Gastrocnemius medialis (tissue), 4 donors: ENCODE measurements at regions of chr5 and their contacts with region 1.

Region 1: DNA sequence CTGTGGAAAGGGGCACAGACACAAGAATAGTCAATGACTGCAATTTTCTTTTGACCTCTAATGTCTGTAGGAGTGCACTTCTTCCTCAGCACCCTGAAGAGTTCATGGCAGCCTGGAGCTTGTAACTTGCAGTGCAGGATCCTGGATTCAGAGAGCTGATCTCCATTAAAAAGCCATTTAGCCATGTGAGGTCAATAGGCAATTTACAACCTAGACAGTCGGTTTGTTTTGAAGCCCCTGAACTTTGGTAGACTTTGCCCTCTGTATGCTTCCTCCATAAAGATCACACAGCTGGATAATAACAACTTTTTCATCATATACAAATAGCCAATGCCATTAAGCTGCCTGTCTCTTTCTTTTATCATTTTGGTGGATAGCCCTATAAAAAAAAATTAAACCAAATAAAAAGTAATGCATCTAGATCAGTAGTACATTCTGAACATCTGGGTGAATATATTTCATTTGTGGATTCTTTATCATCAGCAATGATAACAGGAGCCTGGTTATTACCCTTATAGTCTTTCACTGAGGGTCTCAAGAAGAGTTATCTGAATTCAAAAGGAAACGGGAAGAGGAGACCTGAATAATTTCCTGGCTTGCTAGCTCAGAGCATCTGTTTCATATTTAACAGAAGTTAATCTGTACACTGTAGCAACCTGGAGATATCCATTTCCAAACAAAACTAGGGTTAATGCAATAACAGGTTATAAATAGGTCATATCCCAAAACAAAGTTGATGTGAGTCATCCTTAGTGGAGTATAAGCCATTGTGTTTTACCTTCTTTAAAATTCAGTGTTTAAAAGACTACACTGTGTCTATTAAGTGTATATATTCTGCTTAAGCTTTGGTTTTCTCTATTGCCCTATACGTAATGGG is 193.8 kb upstream of the ACTBL2 start:
- DNase-seq: no peak
- ATAC-seq: peak; percentile 78 to 84
- H3K4me3 ChIP-seq: no peak overlapping the region
- H3K27ac ChIP-seq: peak overlapping the region in 2 of 4 donors; percentile 16 to 54
- H3K4me1 ChIP-seq: peaks cover 7 to 10% of the 10 kb centered on the region in 2 donors
- H3K27me3 ChIP-seq: no peaks in the 10 kb centered on the region
- CTCF ChIP-seq: no peak
- POLR2A ChIP-seq: no peak

Region 2: GRCh38 chr5:57692582-57693487 is 16.4 kb after region 1 on chr5:
- in situ Hi-C with region 1: no loop called
- intact Hi-C with region 1: loop called (anchors 2 kb)
- DNase-seq: peak; percentile 79 to 87
- ATAC-seq: peak; percentile 99 to 100
- H3K4me3 ChIP-seq: peak overlapping the region in 1 of 4 donors; percentile 7
- H3K27ac ChIP-seq: peak overlapping the region; percentile 39 to 61 (median 54)
- H3K4me1 ChIP-seq: peaks cover 11 to 16% of the 10 kb centered on the region in 2 donors
- H3K27me3 ChIP-seq: no peaks in the 10 kb centered on the region
- CTCF ChIP-seq: no peak
- POLR2A ChIP-seq: no peak